SK-N-SH (cell line): ENCODE measurements at regions of chr10 and their contacts with region 1.

Region 1: GRCh38 chr10:124827474-124827873 is 25.9 kb downstream of the ABRAXAS2 start:
- DNase-seq: peak; percentile 45
- H3K4me3 ChIP-seq: no peak overlapping the region
- H3K27ac ChIP-seq: no peak overlapping the region
- H3K4me1 ChIP-seq: peaks cover 0 to 5% of the 10 kb centered on the region in 2 experiments; a peak in 1 of 4 replicates
- H3K27me3 ChIP-seq: no peaks in the 10 kb centered on the region
- CTCF ChIP-seq: peak; percentile 71
- EP300 ChIP-seq: no peak
- RAD21 ChIP-seq: peak; percentile 50

Region 2: GRCh38 chr10:124530215-124530665 is 297.2 kb before region 1 on chr10:
- CTCF ChIA-PET with region 1: interaction called, 26 read pairs
- POLR2A ChIA-PET with region 1: no interaction called
- DNase-seq: peak; percentile 98
- H3K4me3 ChIP-seq: no peak overlapping the region; a peak in 1 of 4 replicates
- H3K27ac ChIP-seq: no peak overlapping the region
- H3K4me1 ChIP-seq: peaks cover 0 to 15% of the 10 kb centered on the region in 2 experiments; a peak in 1 of 4 replicates
- H3K27me3 ChIP-seq: no peaks in the 10 kb centered on the region
- CTCF ChIP-seq: peak; percentile 83
- EP300 ChIP-seq: no peak
- RAD21 ChIP-seq: peak; percentile 92

Region 3: GRCh38 chr10:124748953-124749645 is 78.4 kb before region 1 on chr10:
- CTCF ChIA-PET with region 1: no interaction called
- POLR2A ChIA-PET with region 1: no interaction called
- DNase-seq: no peak
- H3K4me3 ChIP-seq: no peak overlapping the region
- H3K27ac ChIP-seq: no peak overlapping the region
- H3K4me1 ChIP-seq: peaks cover 2 to 4% of the 10 kb centered on the region in 2 experiments; a peak in 2 of 4 replicates
- H3K27me3 ChIP-seq: no peaks in the 10 kb centered on the region
- CTCF ChIP-seq: no peak
- EP300 ChIP-seq: no peak
- RAD21 ChIP-seq: no peak

Region 4: GRCh38 chr10:125023862-125024489 is 196.5 kb after region 1 on chr10:
- CTCF ChIA-PET with region 1: no interaction called
- POLR2A ChIA-PET with region 1: no interaction called
- DNase-seq: peak; percentile 86
- H3K4me3 ChIP-seq: peak overlapping the region; percentile 5 to 19; a peak in 3 of 4 replicates
- H3K27ac ChIP-seq: peak overlapping the region; percentile 67 to 100
- H3K4me1 ChIP-seq: peaks cover 37 to 87% of the 10 kb centered on the region in 2 experiments
- H3K27me3 ChIP-seq: no peaks in the 10 kb centered on the region
- CTCF ChIP-seq: no peak
- EP300 ChIP-seq: peak in 1 of 2 experiments; percentile 63; a peak in 2 of 4 replicates
- RAD21 ChIP-seq: no peak; the same call in 1 of the 2 replicates